CD4-positive, alpha-beta T cell (primary cell): ENCODE measurements at regions of chr7 and their contacts with region 1.

Region 1: DNA sequence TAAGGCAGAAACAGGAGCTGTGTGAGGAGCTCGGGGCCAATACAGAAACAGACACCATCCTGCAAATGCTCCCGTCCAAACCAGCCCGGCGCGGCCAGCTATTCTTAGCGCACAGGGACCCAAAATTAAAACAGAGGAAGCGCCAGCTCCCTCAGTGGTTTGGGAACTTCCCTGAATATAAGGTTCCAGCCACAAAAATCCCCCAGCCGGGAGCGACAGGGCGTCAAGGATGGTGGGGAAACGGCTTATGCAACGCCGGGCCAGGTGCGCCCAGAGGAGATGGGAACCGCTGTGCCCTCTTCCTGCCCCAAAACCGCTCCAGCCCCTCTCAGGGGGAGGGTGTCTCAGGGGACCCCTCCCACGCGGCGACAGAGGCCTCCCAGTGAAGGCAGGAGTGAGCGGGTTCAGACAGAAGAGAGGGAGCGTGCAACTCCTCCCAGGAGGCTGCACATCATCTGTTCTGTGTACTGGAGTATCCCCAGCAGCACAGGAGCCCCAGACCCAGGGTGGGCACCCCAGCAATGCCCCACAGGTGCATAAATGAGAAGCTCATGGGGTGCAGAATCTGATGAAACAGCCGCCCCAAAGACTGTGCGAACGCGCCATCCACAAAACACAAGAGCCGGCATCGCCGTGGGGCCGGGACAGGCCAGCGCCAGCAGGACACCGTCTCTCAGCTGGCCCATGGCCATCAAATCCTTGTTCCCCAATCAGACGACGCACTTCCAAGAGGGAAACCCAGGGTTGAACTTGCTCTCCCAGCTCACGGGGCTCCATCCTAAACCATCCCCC is 73.9 kb upstream of the PDGFA start:
- DNase-seq: peak in 2 of 14 experiments; percentile 52 to 58
- ATAC-seq: peak; percentile 43
- H3K4me3 ChIP-seq: no peak overlapping the region
- H3K4me3 Mint-ChIP-seq: no peak overlapping the region
- H3K27ac ChIP-seq: no peak overlapping the region
- H3K27ac Mint-ChIP-seq: no peak overlapping the region
- H3K4me1 ChIP-seq: peaks cover 24% of the 10 kb centered on the region
- H3K4me1 Mint-ChIP-seq: peaks cover 24% of the 10 kb centered on the region
- H3K27me3 ChIP-seq: no peaks in the 10 kb centered on the region
- H3K27me3 Mint-ChIP-seq: no peaks in the 10 kb centered on the region
- CTCF ChIP-seq: no peak

Region 2: GRCh38 chr7:577741-578370 is 15.7 kb before region 1 on chr7:
- CTCF ChIA-PET with region 1: no interaction called
- POLR2A ChIA-PET with region 1: no interaction called
- intact Hi-C with region 1: no loop called
- DNase-seq: no peak
- ATAC-seq: no peak
- H3K4me3 ChIP-seq: no peak overlapping the region
- H3K4me3 Mint-ChIP-seq: no peak overlapping the region
- H3K27ac ChIP-seq: no peak overlapping the region
- H3K27ac Mint-ChIP-seq: no peak overlapping the region
- H3K4me1 ChIP-seq: peaks cover 4% of the 10 kb centered on the region
- H3K4me1 Mint-ChIP-seq: no peaks in the 10 kb centered on the region
- H3K27me3 ChIP-seq: no peaks in the 10 kb centered on the region
- H3K27me3 Mint-ChIP-seq: no peaks in the 10 kb centered on the region
- CTCF ChIP-seq: no peak

Region 3: GRCh38 chr7:636396-636795 is 42.9 kb after region 1 on chr7:
- CTCF ChIA-PET with region 1: no interaction called
- POLR2A ChIA-PET with region 1: no interaction called
- intact Hi-C with region 1: loop called in 1 of 2 experiments (anchors 5 kb)
- DNase-seq: peak; percentile 28 to 77 (median 47)
- ATAC-seq: peak; percentile 59
- H3K4me3 ChIP-seq: no peak overlapping the region
- H3K4me3 Mint-ChIP-seq: no peak overlapping the region
- H3K27ac ChIP-seq: no peak overlapping the region
- H3K27ac Mint-ChIP-seq: no peak overlapping the region
- H3K4me1 ChIP-seq: peaks cover 8% of the 10 kb centered on the region
- H3K4me1 Mint-ChIP-seq: peaks cover 18% of the 10 kb centered on the region
- H3K27me3 ChIP-seq: no peaks in the 10 kb centered on the region
- H3K27me3 Mint-ChIP-seq: no peaks in the 10 kb centered on the region
- CTCF ChIP-seq: peak; percentile 23

Region 4: DNA sequence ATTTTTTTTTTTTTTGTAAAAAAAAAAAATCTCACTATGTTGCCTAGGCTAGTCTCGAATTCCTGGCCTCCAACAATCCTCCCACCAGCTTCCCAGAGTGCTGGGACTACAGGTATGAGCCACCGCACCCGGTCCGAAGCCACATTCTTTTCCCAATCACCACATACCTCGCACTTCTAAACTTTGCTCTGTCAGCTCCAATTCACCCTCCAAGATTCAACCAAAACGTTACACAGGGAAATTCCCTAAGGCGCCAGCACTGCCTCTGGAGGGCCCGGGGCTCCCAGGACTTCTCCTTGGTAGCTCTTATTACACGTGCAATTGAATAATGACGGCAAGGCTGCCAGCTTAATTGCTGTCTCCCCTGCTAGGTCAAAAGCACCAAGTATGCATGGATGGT is 122.7 kb after region 1 on chr7:
- CTCF ChIA-PET with region 1: no interaction called
- POLR2A ChIA-PET with region 1: no interaction called
- intact Hi-C with region 1: loop called in 1 of 2 experiments (anchors 5 kb)
- DNase-seq: no peak
- ATAC-seq: no peak
- H3K4me3 ChIP-seq: no peak overlapping the region
- H3K4me3 Mint-ChIP-seq: peak overlapping the region; percentile 53
- H3K27ac ChIP-seq: no peak overlapping the region
- H3K27ac Mint-ChIP-seq: peak overlapping the region; percentile 34
- H3K4me1 ChIP-seq: peaks cover 11% of the 10 kb centered on the region
- H3K4me1 Mint-ChIP-seq: peaks cover 7% of the 10 kb centered on the region
- H3K27me3 ChIP-seq: peaks cover 0 to 4% of the 10 kb centered on the region in 2 experiments
- H3K27me3 Mint-ChIP-seq: no peaks in the 10 kb centered on the region
- CTCF ChIP-seq: no peak

Region 5: GRCh38 chr7:859359-860030 is 266.0 kb after region 1 on chr7:
- CTCF ChIA-PET with region 1: no interaction called
- POLR2A ChIA-PET with region 1: no interaction called
- intact Hi-C with region 1: no loop called
- DNase-seq: no peak
- ATAC-seq: no peak
- H3K4me3 ChIP-seq: no peak overlapping the region
- H3K4me3 Mint-ChIP-seq: no peak overlapping the region
- H3K27ac ChIP-seq: no peak overlapping the region
- H3K27ac Mint-ChIP-seq: no peak overlapping the region
- H3K4me1 ChIP-seq: no peaks in the 10 kb centered on the region
- H3K4me1 Mint-ChIP-seq: no peaks in the 10 kb centered on the region
- H3K27me3 ChIP-seq: no peaks in the 10 kb centered on the region
- H3K27me3 Mint-ChIP-seq: no peaks in the 10 kb centered on the region
- CTCF ChIP-seq: no peak